Transverse colon (tissue), 4 donors: ENCODE measurements at regions of chr14 and their contacts with region 1.

Region 1: GRCh38 chr14:68548194-68549056 is 244.4 kb downstream of the ZFP36L1 start:
- DNase-seq: peak; percentile 78
- H3K4me3 ChIP-seq: no peak overlapping the region
- H3K27ac ChIP-seq: peak overlapping the region; percentile 87 to 92 (median 90)
- H3K4me1 ChIP-seq: peaks cover 24 to 77% (median 46%) of the 10 kb centered on the region in 4 donors
- H3K27me3 ChIP-seq: no peaks in the 10 kb centered on the region
- CTCF ChIP-seq: no peak
- EP300 ChIP-seq: peak; percentile 97
- POLR2A ChIP-seq: no peak

Region 2: GRCh38 chr14:67943947-67944346 is 604.5 kb before region 1 on chr14:
- in situ Hi-C with region 1: loop called in 2 of 4 experiments (anchors 25 kb)
- intact Hi-C with region 1: no loop called
- DNase-seq: peak; percentile 75
- H3K4me3 ChIP-seq: no peak overlapping the region
- H3K27ac ChIP-seq: peak overlapping the region; percentile 78 to 85 (median 80)
- H3K4me1 ChIP-seq: peaks cover 25 to 55% (median 33%) of the 10 kb centered on the region in 4 donors
- H3K27me3 ChIP-seq: no peaks in the 10 kb centered on the region
- CTCF ChIP-seq: peak; percentile 62 to 95 (median 70)
- EP300 ChIP-seq: no peak
- POLR2A ChIP-seq: no peak

Region 3: DNA sequence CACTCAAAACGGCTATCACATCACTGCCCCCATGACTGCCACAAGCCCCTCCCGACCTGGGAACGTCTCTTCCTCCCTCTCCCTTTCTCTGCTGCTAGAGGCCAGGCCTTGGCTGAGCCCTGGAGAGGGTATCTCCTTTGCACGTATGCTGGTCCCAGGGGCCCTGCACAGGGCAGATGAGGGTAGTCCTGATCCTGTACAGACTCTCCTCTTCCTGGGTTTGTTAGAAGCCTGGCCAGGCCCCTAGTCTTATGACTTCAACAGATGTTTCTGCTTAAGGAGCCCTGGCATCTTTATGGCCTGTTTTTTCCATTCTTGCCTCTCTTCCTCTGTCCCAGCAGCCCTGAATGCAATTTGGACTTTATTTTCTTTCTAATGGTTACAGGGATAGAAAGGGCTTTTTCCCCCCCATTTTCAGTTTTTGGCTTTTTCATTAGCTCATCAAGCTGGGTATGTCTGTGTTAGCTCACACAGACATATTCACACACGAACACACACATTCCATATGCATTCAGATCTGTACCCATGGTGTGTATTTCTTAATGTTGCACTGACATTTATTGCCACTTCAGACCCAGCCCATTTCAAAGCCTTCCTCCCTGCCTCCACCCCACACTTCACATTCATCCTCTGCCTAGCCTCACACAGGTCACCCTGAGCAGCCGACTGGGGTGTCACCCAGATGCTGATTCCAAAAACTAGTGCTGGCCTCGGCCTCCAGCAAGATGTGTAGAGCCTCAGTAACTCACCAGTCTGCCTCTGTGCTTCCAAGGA is 41.2 kb after region 1 on chr14:
- in situ Hi-C with region 1: no loop called
- intact Hi-C with region 1: loop called (anchors 5 kb)
- DNase-seq: peak; percentile 42
- H3K4me3 ChIP-seq: no peak overlapping the region
- H3K27ac ChIP-seq: peak overlapping the region; percentile 75 to 89 (median 82)
- H3K4me1 ChIP-seq: peaks cover 24 to 35% (median 31%) of the 10 kb centered on the region in 4 donors
- H3K27me3 ChIP-seq: no peaks in the 10 kb centered on the region
- CTCF ChIP-seq: no peak
- EP300 ChIP-seq: peak; percentile 81
- POLR2A ChIP-seq: no peak

Region 4: GRCh38 chr14:68655911-68656360 is 107.5 kb after region 1 on chr14:
- in situ Hi-C with region 1: no loop called
- intact Hi-C with region 1: loop called (anchors 10 kb)
- DNase-seq: no peak
- H3K4me3 ChIP-seq: no peak overlapping the region
- H3K27ac ChIP-seq: peak overlapping the region in 3 of 4 donors; percentile 52 to 91 (median 83)
- H3K4me1 ChIP-seq: peaks cover 22 to 47% (median 35%) of the 10 kb centered on the region in 4 donors
- H3K27me3 ChIP-seq: no peaks in the 10 kb centered on the region
- CTCF ChIP-seq: peak in 2 of 5 experiments; percentile 10 to 11
- EP300 ChIP-seq: no peak
- POLR2A ChIP-seq: no peak

Region 5: GRCh38 chr14:68795597-68796417 is 247.4 kb after region 1 on chr14:
- in situ Hi-C with region 1: no loop called
- intact Hi-C with region 1: loop called (anchors 2 kb)
- DNase-seq: peak; percentile 87
- H3K4me3 ChIP-seq: peak overlapping the region; percentile 55 to 86 (median 70)
- H3K27ac ChIP-seq: peak overlapping the region; percentile 97 to 100 (median 98)
- H3K4me1 ChIP-seq: peaks cover 8 to 12% (median 8%) of the 10 kb centered on the region in 4 donors
- H3K27me3 ChIP-seq: no peaks in the 10 kb centered on the region
- CTCF ChIP-seq: peak; percentile 90 to 99 (median 91)
- EP300 ChIP-seq: no peak
- POLR2A ChIP-seq: peak; percentile 94